ENCODE measurements at regions of chr15 and their contacts with region 1.

Region 1: DNA sequence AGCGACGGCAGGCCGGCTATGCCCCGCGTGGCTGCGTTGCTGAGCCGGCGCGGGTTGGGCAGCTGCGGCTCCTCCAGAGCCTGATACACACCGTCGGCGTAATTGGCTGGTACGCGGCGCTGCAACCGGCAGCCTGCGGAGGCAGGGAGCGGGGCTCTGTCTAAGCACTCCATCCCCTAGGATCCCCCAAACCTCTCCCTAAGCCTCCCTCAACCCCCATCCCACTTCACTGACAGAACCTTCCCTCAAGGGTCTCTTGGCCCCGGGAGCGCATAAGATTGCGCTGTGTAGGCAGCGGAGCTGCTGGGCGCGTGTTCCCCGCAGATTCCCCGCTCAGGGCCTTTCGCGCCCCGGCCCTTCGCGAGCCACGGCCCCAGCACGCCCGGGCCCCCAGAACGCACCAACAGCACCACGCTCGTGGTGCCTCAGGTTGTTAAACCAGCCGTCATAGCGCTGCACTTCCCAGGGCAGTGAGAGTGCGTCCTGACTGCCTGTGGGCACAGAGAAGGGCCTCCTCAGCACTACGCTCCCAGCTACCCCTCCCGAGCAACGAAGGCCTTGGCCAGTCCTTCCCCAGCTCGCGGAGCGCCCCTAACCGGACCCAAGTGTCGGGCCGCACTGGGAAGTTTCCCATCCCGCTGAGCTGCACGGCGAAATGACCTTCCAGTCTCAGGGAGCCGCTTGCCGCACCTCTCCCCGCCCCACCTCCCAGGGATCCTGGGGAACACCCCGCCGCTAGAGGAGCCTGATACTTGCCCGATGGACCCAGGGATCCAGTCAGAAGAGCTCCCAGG is 1.2 kb downstream of the DUOX2 start:
- DNase-seq: peak in 2 of 3 donors; percentile 11 to 44
- H3K4me3 ChIP-seq: peak overlapping the region in 3 of 7 experiments; percentile 40 to 55 (median 49)
- H3K27ac ChIP-seq: no peak overlapping the region
- H3K4me1 ChIP-seq: peaks cover 0 to 50% (median 26%) of the 10 kb centered on the region in 4 experiments
- H3K27me3 ChIP-seq: peaks cover 5 to 94% (median 60%) of the 10 kb centered on the region in 5 experiments

Region 2: GRCh38 chr15:45123397-45123796 is 10.6 kb after region 1 on chr15:
- CTCF ChIA-PET with region 1: interaction called, 10 read pairs
- POLR2A ChIA-PET with region 1: no interaction called
- DNase-seq: no peak
- H3K4me3 ChIP-seq: no peak overlapping the region
- H3K27ac ChIP-seq: no peak overlapping the region
- H3K4me1 ChIP-seq: no peaks in the 10 kb centered on the region
- H3K27me3 ChIP-seq: peaks cover 7 to 56% (median 29%) of the 10 kb centered on the region in 5 experiments

Measured in common myeloid progenitor, CD34-positive (primary cell).